Activated CD4-positive, alpha-beta T cell treated with anti-CD3 and anti-CD28 coated beads for 36 hours (primary cell): ENCODE measurements at regions of chr9 and their contacts with region 1.

Region 1: DNA sequence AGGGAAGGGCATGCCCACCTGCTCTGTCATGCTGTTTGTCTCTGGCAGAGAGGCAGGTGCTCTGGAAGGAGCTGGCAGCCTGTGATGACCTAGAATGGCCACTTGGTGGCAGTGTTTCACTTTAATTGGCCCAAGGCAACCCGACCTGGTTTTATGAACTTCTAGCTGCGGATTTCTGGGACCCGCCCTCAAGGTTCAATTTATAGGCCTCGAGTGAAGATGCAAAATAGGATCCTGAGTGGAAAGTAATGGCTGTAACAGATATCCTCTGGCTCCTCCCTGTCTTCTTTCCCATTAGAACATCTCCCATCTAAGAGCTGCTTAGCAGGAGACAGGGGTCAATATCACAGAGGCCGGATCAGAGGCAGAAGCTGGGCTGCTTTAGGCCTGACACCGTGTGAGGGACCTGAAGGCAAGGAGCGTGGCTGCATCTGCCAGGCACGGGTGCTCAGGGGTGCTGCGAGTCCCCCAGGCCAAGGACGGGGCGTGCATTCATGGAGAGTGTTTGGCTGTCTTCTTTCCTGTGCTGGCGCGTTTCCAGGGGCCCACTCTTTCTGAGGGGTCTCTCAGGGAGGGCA is 56.7 kb upstream of the SLC28A3 start:
- DNase-seq: peak; percentile 77
- ATAC-seq: peak; percentile 76
- H3K4me3 Mint-ChIP-seq: no peak overlapping the region
- H3K27ac Mint-ChIP-seq: no peak overlapping the region
- H3K4me1 Mint-ChIP-seq: no peaks in the 10 kb centered on the region
- H3K27me3 Mint-ChIP-seq: peaks cover 1% of the 10 kb centered on the region

Region 2: DNA sequence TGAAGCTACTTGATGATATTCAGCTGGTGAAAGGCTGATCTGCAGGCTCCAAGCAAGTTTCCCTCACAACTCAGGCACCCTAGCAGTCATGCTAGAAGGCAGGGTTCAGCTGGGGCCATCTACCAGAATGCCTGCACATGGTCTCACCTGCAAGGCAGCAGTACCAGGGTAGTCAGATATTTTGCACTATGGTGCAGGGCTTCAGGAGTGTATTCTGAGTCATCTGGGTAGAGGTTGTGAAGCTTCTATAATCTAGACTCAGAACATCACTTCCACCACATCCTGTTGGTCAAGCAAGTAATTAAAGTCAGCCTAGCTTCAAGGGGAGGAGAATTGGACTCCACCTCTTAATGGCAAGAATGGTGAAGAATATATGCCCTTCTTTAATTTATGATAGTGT is 103.0 kb after region 1 on chr9:
- CTCF ChIA-PET with region 1: no interaction called
- POLR2A ChIA-PET with region 1: no interaction called
- intact Hi-C with region 1: no loop called
- DNase-seq: no peak
- ATAC-seq: no peak
- H3K4me3 Mint-ChIP-seq: no peak overlapping the region
- H3K27ac Mint-ChIP-seq: no peak overlapping the region
- H3K4me1 Mint-ChIP-seq: no peaks in the 10 kb centered on the region
- H3K27me3 Mint-ChIP-seq: no peaks in the 10 kb centered on the region

Region 3: GRCh38 chr9:84781458-84781857 is 384.2 kb after region 1 on chr9:
- CTCF ChIA-PET with region 1: interaction called, 3 read pairs
- POLR2A ChIA-PET with region 1: no interaction called
- intact Hi-C with region 1: loop called (anchors 2 to 10 kb)
- DNase-seq: peak; percentile 15
- ATAC-seq: no peak
- H3K4me3 Mint-ChIP-seq: no peak overlapping the region
- H3K27ac Mint-ChIP-seq: no peak overlapping the region
- H3K4me1 Mint-ChIP-seq: no peaks in the 10 kb centered on the region
- H3K27me3 Mint-ChIP-seq: peaks cover 10% of the 10 kb centered on the region

Region 4: GRCh38 chr9:85142968-85143367 is 745.7 kb after region 1 on chr9:
- CTCF ChIA-PET with region 1: interaction called, 6 read pairs
- POLR2A ChIA-PET with region 1: no interaction called
- intact Hi-C with region 1: loop called in 1 of 2 experiments (anchors 2 kb)
- DNase-seq: no peak
- ATAC-seq: no peak
- H3K4me3 Mint-ChIP-seq: no peak overlapping the region
- H3K27ac Mint-ChIP-seq: no peak overlapping the region
- H3K4me1 Mint-ChIP-seq: no peaks in the 10 kb centered on the region
- H3K27me3 Mint-ChIP-seq: peaks cover 4% of the 10 kb centered on the region

Region 5: DNA sequence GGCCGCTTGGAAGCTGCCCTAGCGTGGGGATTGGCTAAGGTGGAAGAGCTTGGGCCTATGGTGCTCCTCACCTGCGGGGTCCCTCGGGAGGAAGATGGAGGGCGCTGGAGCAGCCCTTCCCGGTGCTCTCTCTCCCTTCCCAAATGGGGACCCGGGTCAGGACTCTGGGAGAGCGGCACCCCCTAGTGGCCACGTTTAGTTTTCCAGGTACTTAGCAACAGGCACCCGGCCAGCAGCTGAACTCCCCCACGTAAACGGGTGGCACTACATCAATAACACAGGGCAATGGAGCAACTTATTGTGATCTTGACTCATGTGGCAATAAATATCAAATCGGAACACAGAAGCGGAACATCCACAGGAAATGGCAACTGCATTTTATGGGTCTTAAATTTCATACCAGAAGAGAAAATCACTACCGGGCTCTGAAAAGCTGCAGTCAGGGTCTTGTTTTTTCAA is 1027.9 kb after region 1 on chr9:
- CTCF ChIA-PET with region 1: interaction called, 5 read pairs
- POLR2A ChIA-PET with region 1: no interaction called
- intact Hi-C with region 1: loop called (anchors 1 to 10 kb)
- DNase-seq: peak; percentile 79
- ATAC-seq: peak; percentile 51
- H3K4me3 Mint-ChIP-seq: no peak overlapping the region
- H3K27ac Mint-ChIP-seq: no peak overlapping the region
- H3K4me1 Mint-ChIP-seq: peaks cover 4% of the 10 kb centered on the region
- H3K27me3 Mint-ChIP-seq: peaks cover 23% of the 10 kb centered on the region